Psoas muscle (tissue), 8 donors: ENCODE measurements at regions of chr9 and their contacts with region 1.

Region 1: DNA sequence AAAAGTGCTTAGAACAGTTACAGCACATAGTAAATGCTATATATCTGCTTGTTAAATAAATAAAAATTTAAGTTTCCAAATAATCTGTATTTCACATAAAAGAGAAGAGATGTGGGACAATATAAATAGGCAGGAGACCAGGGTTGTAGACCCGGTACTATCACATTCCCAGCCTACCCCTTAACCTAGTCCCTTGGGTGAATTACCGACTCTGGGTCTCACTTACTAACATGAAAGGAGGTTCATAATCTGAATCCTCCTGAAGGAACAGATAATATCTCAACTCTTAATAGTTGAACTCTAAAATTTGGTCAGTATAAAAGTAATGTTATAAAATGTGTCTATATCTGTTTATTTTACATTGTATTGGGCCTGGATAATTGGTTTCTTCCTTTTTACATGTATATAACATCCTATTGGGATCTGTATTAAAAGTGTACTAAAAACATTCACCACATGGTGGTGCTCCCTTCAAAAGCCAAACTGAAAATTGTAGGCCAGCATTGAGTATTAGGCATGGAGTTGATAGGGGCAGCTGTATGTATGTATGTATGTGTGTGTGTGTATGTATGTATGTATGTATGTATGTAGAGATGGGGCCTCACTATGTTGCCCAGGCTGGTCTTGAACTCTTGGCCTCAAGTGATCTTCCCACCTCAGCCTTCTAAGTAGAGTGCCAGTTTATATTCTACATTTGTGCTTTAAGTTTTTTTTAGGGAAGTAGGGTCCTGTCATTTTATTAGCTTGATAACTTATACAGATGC is 64.2 kb upstream of the ABL1 start:
- DNase-seq: no peak
- ATAC-seq: peak; percentile 43 to 73 (median 60)
- H3K4me3 ChIP-seq: no peak overlapping the region
- H3K27ac ChIP-seq: no peak overlapping the region
- H3K4me1 ChIP-seq: peaks cover 21% of the 10 kb centered on the region
- H3K27me3 ChIP-seq: no peaks in the 10 kb centered on the region
- CTCF ChIP-seq: peak; percentile 71

Region 2: GRCh38 chr9:130712564-130713285 is 58.1 kb before region 1 on chr9:
- intact Hi-C with region 1: loop called in 1 of 2 experiments (anchors 5 kb)
- DNase-seq: peak; percentile 99
- ATAC-seq: peak; percentile 97 to 98 (median 97)
- H3K4me3 ChIP-seq: peak overlapping the region; percentile 94
- H3K27ac ChIP-seq: peak overlapping the region; percentile 89
- H3K4me1 ChIP-seq: peaks cover 25% of the 10 kb centered on the region
- H3K27me3 ChIP-seq: no peaks in the 10 kb centered on the region
- CTCF ChIP-seq: no peak

Region 3: DNA sequence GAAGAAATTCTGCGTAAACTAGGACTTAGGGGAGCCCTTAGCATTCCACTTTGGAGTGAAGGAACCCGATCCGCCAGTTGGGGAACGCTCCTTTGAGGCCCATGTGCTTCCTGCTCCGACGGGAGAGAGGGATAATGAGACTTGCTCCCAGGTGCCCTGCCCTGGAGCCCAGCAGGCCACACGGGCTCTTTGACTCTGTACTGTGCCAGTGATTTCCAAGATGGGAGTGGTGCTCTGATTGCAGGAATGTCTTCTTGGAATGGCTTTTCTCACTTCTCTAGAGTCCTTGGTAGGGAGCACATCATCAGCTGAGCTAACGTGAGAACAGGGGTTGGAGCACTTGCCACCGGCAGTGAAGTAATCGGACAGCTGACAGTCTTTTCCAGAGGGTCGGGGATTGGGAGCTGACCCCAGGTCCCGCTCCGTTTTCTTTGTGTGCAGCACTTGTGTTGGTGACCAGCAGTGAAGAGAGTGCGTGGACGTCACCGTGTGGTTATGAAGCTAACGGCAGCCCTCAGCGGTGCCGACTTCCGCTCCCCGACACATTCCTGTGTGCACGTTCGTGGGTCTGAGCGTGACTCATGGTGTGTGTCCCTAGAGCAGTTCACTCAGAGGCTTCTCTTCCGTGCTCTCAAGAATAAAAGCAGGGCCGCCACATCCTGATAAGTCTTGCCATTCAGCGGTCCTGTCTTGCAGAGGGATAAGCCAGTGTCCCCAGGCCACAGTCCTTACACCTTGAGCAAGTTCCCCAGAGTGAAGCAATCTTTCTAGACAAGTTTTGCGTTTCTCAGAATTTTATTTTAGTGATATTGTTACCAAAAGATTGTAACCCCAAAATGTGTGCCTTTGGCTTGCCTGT is 89.8 kb after region 1 on chr9:
- intact Hi-C with region 1: loop called (anchors 2 to 5 kb)
- DNase-seq: peak; percentile 85 to 89
- ATAC-seq: peak; percentile 91 to 97 (median 94)
- H3K4me3 ChIP-seq: no peak overlapping the region
- H3K27ac ChIP-seq: peak overlapping the region; percentile 66
- H3K4me1 ChIP-seq: peaks cover 18% of the 10 kb centered on the region
- H3K27me3 ChIP-seq: no peaks in the 10 kb centered on the region
- CTCF ChIP-seq: peak; percentile 26